Astrocyte of the cerebellum (primary cell): ENCODE measurements at regions of chr9 and their contacts with region 1.

Region 1: DNA sequence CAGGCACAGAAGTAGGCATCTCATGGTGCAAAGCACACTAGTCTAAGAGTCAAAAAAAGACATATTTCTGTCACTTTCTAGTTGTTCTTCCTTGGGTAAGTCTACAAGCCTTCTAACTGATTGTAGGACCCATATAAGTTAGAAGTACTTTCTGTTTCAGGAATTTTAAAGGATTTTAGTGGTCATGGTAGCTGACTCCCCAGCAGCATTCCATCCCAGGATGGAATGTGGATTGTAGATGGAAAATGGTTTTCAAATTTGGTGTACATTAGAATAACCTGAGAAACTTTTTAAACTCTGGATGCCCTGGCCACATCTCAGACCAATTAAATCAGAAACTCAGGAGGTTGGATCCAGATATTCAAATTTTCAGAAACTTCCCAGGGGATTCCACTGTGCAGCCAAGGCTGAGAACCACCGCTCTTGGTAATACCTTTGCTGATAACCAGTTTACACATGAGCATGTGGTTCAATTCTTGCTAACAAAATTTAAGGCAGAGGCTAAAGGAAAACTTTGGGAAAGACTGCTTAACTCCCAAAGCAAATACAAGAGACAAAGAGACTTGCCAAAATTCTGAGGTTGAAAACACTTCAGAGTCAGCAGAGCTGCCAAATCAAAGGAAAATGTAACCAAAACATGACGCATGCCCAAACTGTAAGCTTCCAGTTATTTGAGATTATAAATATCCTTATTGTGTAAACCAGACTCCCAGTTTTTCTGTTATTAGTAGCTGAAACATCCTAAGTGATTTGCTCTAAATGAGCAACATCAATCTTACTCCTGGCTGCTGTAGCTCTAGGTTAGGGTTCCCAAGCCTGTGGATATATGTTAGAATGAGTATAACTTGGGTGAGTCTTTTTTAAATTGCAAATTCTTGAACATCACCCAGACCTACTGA is 145.4 kb upstream of the MTAP start:
- DNase-seq: peak; percentile 95
- H3K4me3 ChIP-seq: no peak overlapping the region
- CTCF ChIP-seq: no peak

Region 2: GRCh38 chr9:21616082-21616778 is 40.8 kb before region 1 on chr9:
- in situ Hi-C with region 1: loop called (anchors 5 kb)
- DNase-seq: peak; percentile 93
- H3K4me3 ChIP-seq: no peak overlapping the region
- CTCF ChIP-seq: no peak

Region 3: GRCh38 chr9:21761309-21761901 is 104.4 kb after region 1 on chr9:
- in situ Hi-C with region 1: no loop called
- DNase-seq: peak; percentile 49
- H3K4me3 ChIP-seq: no peak overlapping the region
- CTCF ChIP-seq: no peak